Transverse colon (tissue), 4 donors: ENCODE measurements at regions of chr5 and their contacts with region 1.

Region 1: DNA sequence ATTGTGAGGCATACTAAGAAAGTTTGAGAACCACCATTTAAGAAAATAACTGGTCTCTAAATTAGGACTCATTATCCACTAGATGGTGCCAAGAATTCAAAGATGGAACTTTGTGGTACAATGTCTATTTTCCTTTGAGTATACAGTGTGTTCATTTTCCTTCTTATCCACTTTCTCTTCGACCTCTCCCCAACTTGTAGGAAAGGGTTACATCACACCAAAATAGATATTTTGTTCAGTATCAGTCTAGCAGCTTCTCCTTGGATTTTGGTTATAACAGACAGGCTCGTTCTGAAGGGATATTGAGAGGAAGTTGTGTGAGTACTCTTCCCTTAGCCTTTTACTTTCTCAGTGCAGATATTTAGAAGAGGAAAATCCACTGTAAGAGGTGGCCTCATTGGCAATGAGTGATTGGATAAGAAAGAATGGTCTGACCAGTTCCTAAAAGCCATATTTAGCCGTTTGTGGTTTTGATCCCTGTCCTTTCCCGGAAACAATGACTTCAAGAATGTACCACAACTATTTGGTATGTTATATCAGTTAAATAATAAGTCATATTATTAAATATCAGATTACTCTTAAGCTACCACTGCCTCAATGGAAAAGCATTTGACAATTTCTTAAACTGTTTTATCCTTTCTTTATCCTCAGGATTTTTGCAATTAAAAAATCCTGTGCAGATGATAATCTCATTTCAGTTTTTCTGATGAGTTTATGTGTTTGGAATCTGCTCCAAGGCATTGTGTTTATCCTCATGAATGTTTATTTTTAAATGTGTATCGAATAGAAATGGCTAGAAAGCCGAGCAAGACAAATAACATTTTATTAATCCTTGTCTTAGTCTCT is 69.0 kb upstream of the GRAMD2B start:
- DNase-seq: no peak
- H3K4me3 ChIP-seq: peak overlapping the region in 1 of 4 donors; percentile 9
- H3K27ac ChIP-seq: peak overlapping the region; percentile 18 to 62 (median 45)
- H3K4me1 ChIP-seq: peaks cover 5 to 42% (median 12%) of the 10 kb centered on the region in 4 donors
- H3K27me3 ChIP-seq: no peaks in the 10 kb centered on the region
- CTCF ChIP-seq: peak; percentile 47 to 74 (median 54)
- EP300 ChIP-seq: no peak
- POLR2A ChIP-seq: no peak

Region 2: DNA sequence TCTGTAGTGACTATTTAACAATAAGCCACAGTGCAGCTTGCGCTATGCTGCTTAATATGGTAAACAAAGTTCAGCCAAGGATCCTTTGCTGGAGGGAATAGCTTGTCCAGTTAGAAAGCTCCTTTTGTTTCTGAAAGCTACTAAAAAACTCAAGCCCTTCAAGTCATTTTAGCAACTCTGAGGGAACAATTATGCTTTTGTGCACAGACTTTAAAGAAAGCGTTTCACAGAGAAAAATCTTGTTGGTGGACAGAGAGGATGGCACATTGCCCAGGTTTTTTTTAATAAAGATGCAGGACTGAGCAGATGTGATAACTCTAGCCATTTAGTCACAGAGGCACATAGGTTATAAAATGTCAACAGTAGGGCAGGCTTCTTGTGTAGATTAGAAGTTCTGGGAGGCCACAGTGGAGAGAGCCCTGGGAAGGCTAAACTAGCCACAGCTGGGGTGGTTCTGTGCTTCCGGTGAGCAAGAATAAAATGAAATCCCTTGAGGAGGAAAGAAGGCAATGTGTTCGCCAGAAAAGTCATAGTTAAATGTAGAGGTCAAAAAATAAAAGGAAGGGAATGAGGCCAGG is 177.4 kb after region 1 on chr5:
- in situ Hi-C with region 1: loop called (anchors 5 to 10 kb)
- intact Hi-C with region 1: no loop called
- DNase-seq: no peak
- H3K4me3 ChIP-seq: no peak overlapping the region
- H3K27ac ChIP-seq: peak overlapping the region; percentile 50 to 70 (median 54)
- H3K4me1 ChIP-seq: peaks cover 8 to 25% (median 15%) of the 10 kb centered on the region in 4 donors
- H3K27me3 ChIP-seq: no peaks in the 10 kb centered on the region
- CTCF ChIP-seq: no peak
- EP300 ChIP-seq: no peak
- POLR2A ChIP-seq: no peak

Region 3: GRCh38 chr5:126536874-126537273 is 182.6 kb after region 1 on chr5:
- in situ Hi-C with region 1: loop called (anchors 5 to 10 kb)
- intact Hi-C with region 1: loop called (anchors 2 kb)
- DNase-seq: no peak
- H3K4me3 ChIP-seq: no peak overlapping the region
- H3K27ac ChIP-seq: peak overlapping the region in 2 of 4 donors; percentile 21 to 22
- H3K4me1 ChIP-seq: peaks cover 3 to 24% (median 6%) of the 10 kb centered on the region in 4 donors
- H3K27me3 ChIP-seq: no peaks in the 10 kb centered on the region
- CTCF ChIP-seq: peak in 1 of 5 experiments; percentile 11
- EP300 ChIP-seq: no peak
- POLR2A ChIP-seq: no peak